ENCODE measurements at regions of chr2 and their contacts with region 1.

Region 1: DNA sequence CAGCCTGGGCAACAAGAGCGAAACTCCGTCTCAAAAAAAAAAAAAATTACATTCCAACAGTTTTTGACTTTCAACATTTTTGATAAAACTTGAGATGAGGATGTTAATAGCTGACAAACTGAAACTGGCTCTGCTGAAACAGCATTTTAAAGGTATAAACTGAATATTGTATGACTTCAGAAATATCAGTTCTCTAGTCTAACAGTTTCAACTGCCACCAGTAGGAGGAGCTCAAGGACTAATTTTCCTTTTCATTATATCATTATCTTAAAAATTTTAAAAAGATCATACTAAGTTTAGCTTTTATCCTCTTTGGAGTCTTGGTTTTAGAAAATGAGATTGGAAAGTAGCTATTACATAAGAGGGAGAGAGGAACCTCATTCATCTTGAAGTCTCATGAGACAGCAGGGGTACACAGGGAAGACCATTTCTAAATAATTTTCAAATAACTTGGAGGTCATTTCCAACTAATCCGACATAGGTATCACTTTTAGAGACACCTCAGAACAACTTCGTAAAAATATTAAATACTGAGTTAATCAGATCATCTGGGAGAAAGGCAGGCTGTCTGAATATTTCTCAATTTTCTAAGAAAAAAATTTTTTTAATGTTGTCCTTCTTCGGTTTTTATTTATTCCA is 37.6 kb upstream of the MCM6 start:
- DNase-seq: peak; percentile 53
- H3K4me3 Mint-ChIP-seq: no peak overlapping the region
- H3K27ac Mint-ChIP-seq: peak overlapping the region; percentile 11
- H3K4me1 Mint-ChIP-seq: peaks cover 13% of the 10 kb centered on the region
- H3K27me3 Mint-ChIP-seq: no peaks in the 10 kb centered on the region

Region 2: DNA sequence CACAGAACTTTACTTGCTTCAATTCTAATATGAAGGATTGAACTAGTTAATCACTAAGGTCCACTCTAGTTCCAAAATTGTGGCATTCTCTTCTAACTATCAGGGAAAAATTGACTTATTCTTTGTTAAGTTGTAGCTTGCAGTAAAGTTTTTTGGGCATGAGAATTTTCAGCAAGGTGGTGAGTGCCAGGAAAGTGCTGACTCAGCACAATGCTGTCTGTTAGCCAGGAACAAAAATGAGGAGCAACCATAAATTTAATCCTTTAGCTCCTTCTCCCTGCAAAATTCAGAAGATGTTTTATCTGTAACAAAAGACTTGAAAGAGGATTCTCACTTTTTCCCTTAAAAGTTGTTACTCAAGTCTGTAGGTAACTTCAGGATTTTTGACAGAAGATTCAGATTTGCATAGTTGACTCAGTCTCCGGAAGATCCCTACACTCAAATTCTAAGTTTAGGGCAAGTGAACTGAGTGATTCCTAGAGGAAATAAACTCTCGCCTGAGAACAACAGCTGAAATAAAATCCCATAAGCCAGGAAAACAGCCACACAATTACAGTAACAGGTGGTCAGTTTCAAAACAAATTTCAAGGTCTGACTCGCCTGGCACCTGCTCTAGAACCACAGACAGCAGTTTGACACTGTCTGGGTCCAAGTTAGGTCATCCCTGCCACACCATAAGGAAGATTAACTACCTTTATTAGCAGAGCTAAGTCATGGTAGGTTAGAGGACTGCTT is 91.8 kb after region 1 on chr2:
- CTCF ChIA-PET with region 1: no interaction called
- DNase-seq: no peak
- H3K4me3 Mint-ChIP-seq: no peak overlapping the region
- H3K27ac Mint-ChIP-seq: no peak overlapping the region
- H3K4me1 Mint-ChIP-seq: peaks cover 64% of the 10 kb centered on the region
- H3K27me3 Mint-ChIP-seq: no peaks in the 10 kb centered on the region

Region 3: DNA sequence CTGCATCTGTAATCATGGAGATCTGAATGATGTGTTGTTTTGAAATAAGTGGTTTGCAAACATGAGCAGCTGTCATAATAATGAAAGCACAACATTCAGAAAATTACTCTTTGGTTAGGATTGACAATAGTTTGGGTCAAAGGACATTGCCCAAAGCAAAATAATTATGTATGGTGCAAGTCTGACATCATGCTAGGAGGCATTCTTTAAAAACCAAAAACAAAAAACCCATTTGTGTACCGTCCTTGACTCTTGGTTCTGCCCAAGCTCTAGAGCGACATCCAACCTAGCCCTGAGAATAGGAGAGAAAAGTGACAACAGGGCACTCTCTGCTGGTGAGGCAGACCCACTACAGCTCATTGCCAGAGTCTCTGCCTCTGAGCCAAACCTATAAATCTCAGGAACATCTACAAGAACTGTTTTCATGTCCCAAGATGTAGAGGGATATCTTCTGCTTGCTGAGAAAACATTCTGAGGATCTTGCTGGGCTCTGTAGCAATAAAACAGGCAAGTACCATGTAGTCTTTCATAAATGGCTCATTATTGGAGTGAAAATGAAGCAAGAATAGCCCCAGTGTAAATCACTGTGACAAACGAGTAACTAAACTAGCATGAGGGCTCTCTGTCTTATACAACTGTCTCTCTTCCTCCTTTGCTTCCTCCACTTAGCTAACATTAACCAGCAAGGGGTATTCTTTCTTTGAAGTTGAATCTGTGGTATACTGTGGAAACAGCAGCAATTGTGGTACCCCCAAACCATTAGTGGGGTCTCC is 470.9 kb after region 1 on chr2:
- CTCF ChIA-PET with region 1: interaction called, 98 read pairs
- DNase-seq: peak; percentile 69
- H3K4me3 Mint-ChIP-seq: no peak overlapping the region
- H3K27ac Mint-ChIP-seq: peak overlapping the region; percentile 90
- H3K4me1 Mint-ChIP-seq: peaks cover 47% of the 10 kb centered on the region
- H3K27me3 Mint-ChIP-seq: no peaks in the 10 kb centered on the region